Mammary epithelial cell (primary cell): ENCODE measurements at regions of chr16 and their contacts with region 1.

Region 1: DNA sequence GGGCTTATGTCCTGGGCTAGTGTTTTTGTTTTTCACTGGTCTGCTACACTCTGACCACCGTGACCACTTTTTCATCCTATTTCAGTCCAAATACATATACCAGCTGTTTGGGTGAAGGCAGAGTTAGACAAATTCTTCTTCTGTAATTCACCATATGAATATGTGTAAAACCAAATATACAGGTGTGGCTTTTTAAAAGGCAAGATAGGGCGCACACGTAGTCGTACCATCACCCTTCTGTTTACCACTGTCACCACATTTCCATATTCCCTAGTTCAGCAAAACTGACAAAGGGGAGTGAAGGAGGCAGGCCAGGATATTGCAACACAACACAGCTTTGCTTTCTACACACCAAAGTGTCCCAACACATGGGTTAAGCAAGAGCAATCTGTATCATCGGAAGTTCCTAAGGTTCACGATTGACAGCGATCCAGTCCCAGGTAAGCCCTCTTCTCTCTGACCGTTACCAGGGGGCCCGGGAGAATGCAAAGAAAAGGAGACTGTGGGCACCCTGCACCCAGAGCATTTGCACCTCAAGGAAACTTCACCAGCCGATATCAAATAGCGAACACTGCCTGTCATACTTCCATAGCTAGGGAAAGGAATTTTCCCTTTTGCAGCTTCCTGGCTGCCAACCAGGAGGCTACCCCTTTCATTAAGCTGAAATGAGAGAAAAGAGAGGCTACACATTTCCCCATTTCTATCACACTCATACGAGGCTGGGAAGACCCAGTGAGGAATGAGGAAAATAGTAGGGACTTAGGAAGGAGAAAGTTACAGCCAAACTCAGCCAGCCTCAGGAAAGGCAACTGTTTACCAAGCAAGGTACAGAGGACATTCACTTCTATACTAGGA is 23.1 kb downstream of the CREBBP start:
- DNase-seq: peak; percentile 71
- H3K4me3 ChIP-seq: no peak overlapping the region
- H3K27ac ChIP-seq: no peak overlapping the region
- H3K4me1 ChIP-seq: peaks cover 18% of the 10 kb centered on the region
- H3K27me3 ChIP-seq: no peaks in the 10 kb centered on the region
- CTCF ChIP-seq: no peak

Region 2: GRCh38 chr16:3536271-3536731 is 321.1 kb before region 1 on chr16:
- CTCF ChIA-PET with region 1: no interaction called
- dilution Hi-C with region 1: no loop called
- in situ Hi-C with region 1: loop called in 1 of 2 experiments (anchors 25 kb)
- intact Hi-C with region 1: no loop called
- DNase-seq: no peak
- H3K4me3 ChIP-seq: no peak overlapping the region
- H3K27ac ChIP-seq: no peak overlapping the region
- H3K4me1 ChIP-seq: no peaks in the 10 kb centered on the region
- H3K27me3 ChIP-seq: no peaks in the 10 kb centered on the region
- CTCF ChIP-seq: no peak

Region 3: GRCh38 chr16:3804426-3805016 is 52.9 kb before region 1 on chr16:
- CTCF ChIA-PET with region 1: no interaction called
- dilution Hi-C with region 1: no loop called
- in situ Hi-C with region 1: no loop called
- intact Hi-C with region 1: no loop called
- DNase-seq: no peak
- H3K4me3 ChIP-seq: no peak overlapping the region
- H3K27ac ChIP-seq: no peak overlapping the region
- H3K4me1 ChIP-seq: no peaks in the 10 kb centered on the region
- H3K27me3 ChIP-seq: no peaks in the 10 kb centered on the region
- CTCF ChIP-seq: no peak

Region 4: GRCh38 chr16:3816326-3816725 is 41.1 kb before region 1 on chr16:
- CTCF ChIA-PET with region 1: no interaction called
- dilution Hi-C with region 1: no loop called
- in situ Hi-C with region 1: no loop called
- intact Hi-C with region 1: loop called (anchors 1 kb)
- DNase-seq: no peak
- H3K4me3 ChIP-seq: no peak overlapping the region
- H3K27ac ChIP-seq: no peak overlapping the region
- H3K4me1 ChIP-seq: peaks cover 22% of the 10 kb centered on the region
- H3K27me3 ChIP-seq: no peaks in the 10 kb centered on the region
- CTCF ChIP-seq: no peak

Region 5: DNA sequence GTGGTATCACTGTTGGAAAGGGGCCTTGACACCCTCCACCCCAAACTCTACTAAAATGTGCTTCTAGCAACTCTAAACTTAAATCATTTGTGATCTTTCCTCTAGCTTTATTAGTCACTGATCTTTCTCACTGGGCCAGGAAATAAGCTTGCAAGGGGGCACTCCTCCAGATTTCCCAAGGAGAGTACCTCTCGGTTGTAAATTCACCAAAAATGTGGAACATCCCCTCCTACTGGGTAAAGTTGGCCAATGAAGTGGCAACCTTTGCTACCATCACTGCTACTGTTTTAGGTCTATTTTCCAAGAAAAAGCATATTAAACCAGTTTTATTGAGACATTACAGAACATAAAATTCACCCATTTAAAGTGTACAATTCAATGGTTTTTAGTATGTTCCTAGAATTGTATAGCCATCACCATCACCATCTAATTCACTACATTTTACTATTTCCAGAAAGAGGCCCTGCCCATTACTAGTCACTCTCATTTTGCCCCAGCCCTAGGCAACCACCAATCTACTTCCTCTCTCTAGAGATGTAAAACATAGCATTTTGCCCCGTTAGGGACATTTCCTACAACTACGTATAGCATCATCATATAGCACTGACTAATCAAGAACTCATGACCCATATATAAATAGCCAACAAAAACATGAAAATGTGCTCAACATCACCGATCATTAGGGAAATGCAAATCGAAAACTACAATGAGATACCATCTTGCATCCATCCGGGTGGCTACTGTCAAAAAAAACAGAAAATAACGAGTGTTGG is 303.4 kb after region 1 on chr16:
- CTCF ChIA-PET with region 1: no interaction called
- dilution Hi-C with region 1: no loop called
- in situ Hi-C with region 1: no loop called
- intact Hi-C with region 1: no loop called
- DNase-seq: no peak
- H3K4me3 ChIP-seq: no peak overlapping the region
- H3K27ac ChIP-seq: no peak overlapping the region
- H3K4me1 ChIP-seq: no peaks in the 10 kb centered on the region
- H3K27me3 ChIP-seq: no peaks in the 10 kb centered on the region
- CTCF ChIP-seq: no peak